ENCODE measurements at regions of chr22 and their contacts with region 1.

Region 1: GRCh38 chr22:27718186-27719032 is 83.1 kb downstream of the MN1 start:
- DNase-seq: peak; percentile 79 to 88 (median 80)
- ATAC-seq: peak; percentile 89 to 96 (median 96)
- H3K4me3 ChIP-seq: peak overlapping the region in 1 of 12 donors; percentile 13
- H3K27ac ChIP-seq: peak overlapping the region in 11 of 12 donors; percentile 42 to 80 (median 59)
- H3K4me1 ChIP-seq: peaks cover 0 to 28% (median 19%) of the 10 kb centered on the region in 12 donors
- H3K27me3 ChIP-seq: no peaks in the 10 kb centered on the region
- CTCF ChIP-seq: no peak
- POLR2A ChIP-seq: peak in 1 of 2 donors; percentile 44

Region 2: GRCh38 chr22:27405672-27406388 is 312.6 kb before region 1 on chr22:
- intact Hi-C with region 1: loop called in 1 of 10 experiments (anchors 10 kb)
- DNase-seq: peak; percentile 47 to 83 (median 62)
- ATAC-seq: peak; percentile 74 to 89 (median 82)
- H3K4me3 ChIP-seq: no peak overlapping the region
- H3K27ac ChIP-seq: no peak overlapping the region
- H3K4me1 ChIP-seq: peaks cover 0 to 9% (median 0%) of the 10 kb centered on the region in 12 donors
- H3K27me3 ChIP-seq: peaks cover 0 to 24% (median 0%) of the 10 kb centered on the region in 9 donors
- CTCF ChIP-seq: peak; percentile 64 to 81 (median 74)
- POLR2A ChIP-seq: no peak

Region 3: GRCh38 chr22:27438271-27438980 is 280.0 kb before region 1 on chr22:
- intact Hi-C with region 1: no loop called
- DNase-seq: peak in 1 of 5 donors; percentile 64
- ATAC-seq: peak in 1 of 4 donors; percentile 21
- H3K4me3 ChIP-seq: peak overlapping the region in 1 of 12 donors; percentile 13
- H3K27ac ChIP-seq: peak overlapping the region in 5 of 12 donors; percentile 5 to 52 (median 7)
- H3K4me1 ChIP-seq: peaks cover 0 to 37% (median 10%) of the 10 kb centered on the region in 12 donors
- H3K27me3 ChIP-seq: peaks cover 0 to 38% (median 3%) of the 10 kb centered on the region in 9 donors
- CTCF ChIP-seq: peak in 3 of 12 donors; percentile 10 to 18 (median 16)
- POLR2A ChIP-seq: no peak

Region 4: GRCh38 chr22:27581688-27582087 is 136.7 kb before region 1 on chr22:
- intact Hi-C with region 1: no loop called
- DNase-seq: peak; percentile 85 to 93 (median 87)
- ATAC-seq: peak; percentile 77 to 83 (median 80)
- H3K4me3 ChIP-seq: no peak overlapping the region
- H3K27ac ChIP-seq: peak overlapping the region in 8 of 12 donors; percentile 8 to 73 (median 58)
- H3K4me1 ChIP-seq: peaks cover 0 to 39% (median 9%) of the 10 kb centered on the region in 12 donors
- H3K27me3 ChIP-seq: no peaks in the 10 kb centered on the region
- CTCF ChIP-seq: no peak
- POLR2A ChIP-seq: no peak

Region 5: DNA sequence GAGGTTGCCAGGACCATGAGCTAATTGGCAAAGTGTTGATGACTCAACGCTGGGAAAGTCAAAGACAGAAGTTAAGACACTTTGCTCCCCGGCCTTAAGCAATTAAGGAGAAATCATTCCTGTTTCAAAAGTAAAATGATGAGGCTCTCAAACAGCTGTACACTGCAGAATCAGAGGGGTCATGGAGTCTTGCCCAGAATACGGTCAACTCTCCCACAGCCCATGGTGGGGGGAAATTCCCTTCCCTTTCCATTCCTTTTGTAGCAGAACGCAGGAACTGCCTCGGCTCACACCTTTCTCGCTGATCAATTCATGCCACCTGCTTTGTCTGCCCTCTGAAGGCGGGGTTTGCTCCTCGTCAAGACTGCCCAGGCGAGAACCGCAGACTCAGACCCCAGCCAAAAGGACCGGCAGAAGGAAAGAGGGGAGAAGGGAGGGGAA is 30.4 kb after region 1 on chr22:
- intact Hi-C with region 1: no loop called
- DNase-seq: peak in 1 of 5 donors; percentile 45
- ATAC-seq: peak; percentile 8 to 62 (median 28)
- H3K4me3 ChIP-seq: no peak overlapping the region
- H3K27ac ChIP-seq: peak overlapping the region in 8 of 12 donors; percentile 12 to 72 (median 56)
- H3K4me1 ChIP-seq: peaks cover 0 to 47% (median 32%) of the 10 kb centered on the region in 12 donors
- H3K27me3 ChIP-seq: no peaks in the 10 kb centered on the region
- CTCF ChIP-seq: no peak
- POLR2A ChIP-seq: no peak

Measured in heart left ventricle (tissue), 16 donors.